ENCODE measurements at regions of chr11 and their contacts with region 1.

Region 1: GRCh38 chr11:67507864-67508485 is at the start of gene CDK2AP2:
- DNase-seq: peak; percentile 100
- H3K4me3 ChIP-seq: peak within 1 kb of the TSS; percentile 66
- H3K27ac ChIP-seq: peak within 1 kb of the TSS; percentile 92
- H3K4me1 ChIP-seq: peaks cover 23% of the 10 kb centered on the region
- H3K27me3 ChIP-seq: no peaks in the 10 kb centered on the region
- CTCF ChIP-seq: no peak
- total RNA-seq, gene CDK2AP2: 91.6 to 142 TPM

Region 2: DNA sequence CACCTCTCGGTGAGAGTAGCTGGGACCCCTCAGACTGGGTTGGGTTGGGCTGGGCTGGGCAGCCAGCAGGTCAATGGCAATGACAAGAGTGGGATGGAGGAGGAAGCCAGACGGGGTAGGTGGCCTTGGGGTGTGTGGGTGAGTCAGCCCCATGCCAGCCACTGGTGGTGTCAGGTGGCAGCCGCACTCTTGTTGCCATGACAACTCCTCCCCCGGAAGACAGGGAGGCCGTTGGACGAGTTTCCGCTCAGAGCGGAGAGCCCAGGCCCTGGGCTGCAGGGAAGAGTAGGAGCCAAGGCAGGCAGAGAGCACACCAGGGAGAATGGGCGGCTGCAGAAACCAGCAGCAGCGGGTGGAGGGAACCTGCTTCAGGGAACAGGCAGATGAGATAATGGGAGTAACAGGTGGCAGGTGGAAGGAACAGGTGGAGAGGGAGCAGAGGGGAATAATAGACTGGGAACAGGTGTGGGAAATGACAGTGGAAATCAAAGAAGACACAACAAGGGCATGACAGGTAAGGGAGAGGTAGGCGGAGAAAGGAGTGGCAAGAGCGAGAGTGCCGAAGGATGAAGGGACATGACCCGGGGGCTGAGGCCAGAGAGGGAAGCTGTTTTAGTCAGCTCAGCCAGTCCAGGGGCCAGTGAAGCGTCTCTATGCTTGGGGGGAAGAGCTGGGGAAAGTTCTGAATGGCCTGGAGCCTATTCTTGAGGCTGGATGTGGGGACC is 787.6 kb before region 1 on chr11:
- intact Hi-C with region 1: no loop called
- DNase-seq: peak; percentile 73
- H3K4me3 ChIP-seq: no peak overlapping the region
- H3K27ac ChIP-seq: no peak overlapping the region
- H3K4me1 ChIP-seq: no peaks in the 10 kb centered on the region
- H3K27me3 ChIP-seq: peaks cover 1% of the 10 kb centered on the region
- CTCF ChIP-seq: no peak

Region 3: DNA sequence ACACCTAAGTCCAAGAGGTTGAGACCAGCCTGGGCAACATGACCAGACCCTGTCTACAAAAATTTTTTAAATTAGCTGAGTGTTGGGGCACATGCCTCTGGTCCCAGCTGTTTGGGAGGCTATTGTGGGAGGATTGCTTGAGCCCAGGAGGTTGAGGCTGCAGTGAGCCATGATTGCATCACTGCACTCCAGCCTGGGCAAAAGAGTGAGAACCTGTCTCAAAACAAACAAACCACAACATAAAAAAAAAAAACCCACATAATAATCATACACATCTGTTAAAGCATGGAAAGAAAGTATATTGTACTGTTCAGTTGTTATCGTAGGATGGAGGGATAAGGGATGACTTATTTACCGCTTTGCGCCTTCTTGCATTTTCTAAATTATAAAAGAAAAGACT is 277.6 kb before region 1 on chr11:
- intact Hi-C with region 1: no loop called
- DNase-seq: no peak
- H3K4me3 ChIP-seq: no peak overlapping the region
- H3K27ac ChIP-seq: no peak overlapping the region
- H3K4me1 ChIP-seq: no peaks in the 10 kb centered on the region
- H3K27me3 ChIP-seq: no peaks in the 10 kb centered on the region
- CTCF ChIP-seq: no peak

Region 4: GRCh38 chr11:67345920-67346799 is 161.8 kb before region 1 on chr11:
- intact Hi-C with region 1: loop called (anchors 5 kb)
- DNase-seq: peak; percentile 77
- H3K4me3 ChIP-seq: no peak overlapping the region
- H3K27ac ChIP-seq: peak overlapping the region; percentile 91
- H3K4me1 ChIP-seq: peaks cover 11% of the 10 kb centered on the region
- H3K27me3 ChIP-seq: no peaks in the 10 kb centered on the region
- CTCF ChIP-seq: peak; percentile 68

Region 5: GRCh38 chr11:67391304-67392132 is 116.5 kb before region 1 on chr11 and contains the start of gene RAD9A:
- intact Hi-C with region 1: loop called (anchors 5 kb)
- DNase-seq: peak; percentile 97
- H3K4me3 ChIP-seq: peak within 1 kb of the TSS; percentile 81
- H3K27ac ChIP-seq: peak within 1 kb of the TSS; percentile 81
- H3K4me1 ChIP-seq: peaks cover 5% of the 10 kb centered on the region
- H3K27me3 ChIP-seq: no peaks in the 10 kb centered on the region
- CTCF ChIP-seq: no peak
- total RNA-seq, gene RAD9A: 21.8 to 35.1 TPM

Region 6: GRCh38 chr11:67401495-67402191 is 106.3 kb before region 1 on chr11 and contains the start of gene PPP1CA:
- intact Hi-C with region 1: no loop called
- DNase-seq: peak; percentile 93
- H3K4me3 ChIP-seq: peak within 1 kb of the TSS; percentile 94
- H3K27ac ChIP-seq: peak within 1 kb of the TSS; percentile 92
- H3K4me1 ChIP-seq: peaks cover 14% of the 10 kb centered on the region
- H3K27me3 ChIP-seq: no peaks in the 10 kb centered on the region
- CTCF ChIP-seq: peak; percentile 21
- total RNA-seq, gene PPP1CA: 242 to 280 TPM

Region 7: DNA sequence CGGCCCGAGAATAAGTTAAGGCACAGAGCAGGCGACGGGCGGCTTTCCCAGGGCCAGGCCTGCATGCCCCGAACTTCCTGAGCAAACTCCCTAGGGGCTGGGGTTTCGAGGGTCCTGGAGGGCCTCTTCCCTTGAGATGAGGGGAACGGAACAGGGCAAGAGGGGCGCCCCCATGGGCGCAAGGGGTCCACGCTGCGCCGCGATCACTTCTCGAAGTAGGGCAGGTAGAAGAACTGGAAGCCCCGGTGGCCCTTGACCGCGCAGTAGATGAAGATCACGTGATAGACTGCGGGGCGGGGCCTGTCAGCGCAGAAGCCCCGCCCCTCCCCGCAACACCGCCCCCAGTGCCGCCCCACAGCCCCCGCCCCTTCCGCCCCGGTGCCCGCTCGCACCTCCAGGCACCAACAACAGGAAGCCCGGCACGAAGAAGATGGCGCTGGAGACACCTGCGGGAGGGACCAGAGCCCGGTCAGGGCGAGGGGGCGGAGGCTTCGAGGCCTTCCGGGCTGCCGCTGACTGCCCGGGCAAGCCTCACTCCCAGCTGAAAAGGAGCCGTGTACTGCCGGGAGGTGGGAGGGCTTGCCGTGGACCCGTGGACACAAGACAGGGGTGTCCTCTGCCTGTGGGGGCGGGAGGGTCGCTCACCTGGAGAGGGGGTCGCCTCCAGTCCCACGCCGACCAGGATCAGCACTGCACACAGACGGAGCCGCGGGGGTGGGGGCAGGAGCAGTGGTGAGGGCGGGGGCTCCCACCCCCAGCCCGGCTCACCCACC is 43.4 kb before region 1 on chr11:
- intact Hi-C with region 1: no loop called
- DNase-seq: peak; percentile 95
- H3K4me3 ChIP-seq: peak overlapping the region; percentile 63
- H3K27ac ChIP-seq: peak overlapping the region; percentile 94
- H3K4me1 ChIP-seq: peaks cover 18% of the 10 kb centered on the region
- H3K27me3 ChIP-seq: no peaks in the 10 kb centered on the region
- CTCF ChIP-seq: no peak